PC-3 (cell line): ENCODE measurements at regions of chr17 and their contacts with region 1.

Region 1: GRCh38 chr17:6843241-6843880 is 11.8 kb upstream of the TEKT1 start:
- DNase-seq: peak; percentile 78
- ATAC-seq: no peak
- H3K4me3 ChIP-seq: no peak overlapping the region
- H3K27ac ChIP-seq: no peak overlapping the region
- H3K4me1 ChIP-seq: no peaks in the 10 kb centered on the region; the same call in 1 of the 2 replicates
- H3K27me3 ChIP-seq: no peaks in the 10 kb centered on the region
- CTCF ChIP-seq: peak; percentile 61

Region 2: GRCh38 chr17:6666077-6666521 is 177.3 kb before region 1 on chr17:
- CTCF ChIA-PET with region 1: interaction called, 3 read pairs
- POLR2A ChIA-PET with region 1: no interaction called
- intact Hi-C with region 1: loop called (anchors 1 kb)
- DNase-seq: peak; percentile 84
- ATAC-seq: peak; percentile 71
- H3K4me3 ChIP-seq: no peak overlapping the region
- H3K27ac ChIP-seq: no peak overlapping the region
- H3K4me1 ChIP-seq: peaks cover 25% of the 10 kb centered on the region
- H3K27me3 ChIP-seq: no peaks in the 10 kb centered on the region
- CTCF ChIP-seq: peak; percentile 90

Region 3: DNA sequence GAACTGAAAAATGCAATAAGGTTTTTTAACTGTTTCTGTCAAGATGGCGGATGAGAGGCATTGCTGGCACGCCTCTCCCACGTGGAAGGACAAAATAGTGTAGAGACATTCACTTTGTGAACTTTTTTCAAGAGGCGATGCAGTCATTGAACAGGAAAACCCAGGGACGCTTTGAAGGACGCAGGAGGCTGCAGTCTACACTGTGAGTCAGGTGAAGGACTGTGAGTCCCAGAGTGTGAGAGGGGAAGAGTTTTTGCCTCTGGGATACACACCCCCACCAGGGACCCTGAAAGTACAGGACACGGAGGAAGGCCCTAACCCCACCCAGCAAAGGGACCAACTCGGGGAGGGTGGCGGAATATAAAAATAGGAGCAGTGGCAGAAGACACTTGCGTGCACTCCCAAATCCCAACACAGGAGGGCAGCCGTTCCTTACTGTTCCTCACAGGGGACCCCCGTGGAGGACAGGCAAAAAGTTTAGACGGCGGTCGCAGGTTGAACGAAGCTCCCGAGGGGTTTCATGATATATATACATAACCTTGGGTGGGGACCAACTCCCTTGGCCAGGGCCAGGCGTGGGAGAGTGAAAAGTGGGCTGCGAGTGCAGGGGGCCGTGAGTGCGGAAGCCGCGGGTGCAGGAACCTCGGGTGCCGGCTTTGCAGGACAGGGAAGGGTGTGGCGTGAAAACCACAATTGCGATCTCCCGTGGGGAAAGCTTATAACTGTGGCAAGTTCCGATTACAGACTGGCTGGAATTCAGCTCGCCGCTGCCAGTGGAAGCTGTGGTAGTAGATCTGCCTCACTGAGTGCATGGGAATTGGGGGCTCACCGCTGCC is 70.5 kb after region 1 on chr17:
- CTCF ChIA-PET with region 1: no interaction called
- POLR2A ChIA-PET with region 1: no interaction called
- intact Hi-C with region 1: loop called (anchors 5 kb)
- DNase-seq: peak; percentile 8
- ATAC-seq: no peak
- H3K4me3 ChIP-seq: no peak overlapping the region
- H3K27ac ChIP-seq: no peak overlapping the region
- H3K4me1 ChIP-seq: no peaks in the 10 kb centered on the region
- H3K27me3 ChIP-seq: no peaks in the 10 kb centered on the region
- CTCF ChIP-seq: peak; percentile 52

Region 4: GRCh38 chr17:7004398-7005253 is 161.3 kb after region 1 on chr17:
- CTCF ChIA-PET with region 1: no interaction called
- POLR2A ChIA-PET with region 1: no interaction called
- intact Hi-C with region 1: loop called (anchors 5 kb)
- DNase-seq: peak; percentile 82
- ATAC-seq: peak; percentile 71
- H3K4me3 ChIP-seq: no peak overlapping the region
- H3K27ac ChIP-seq: no peak overlapping the region
- H3K4me1 ChIP-seq: no peaks in the 10 kb centered on the region
- H3K27me3 ChIP-seq: no peaks in the 10 kb centered on the region
- CTCF ChIP-seq: peak; percentile 80

Region 5: DNA sequence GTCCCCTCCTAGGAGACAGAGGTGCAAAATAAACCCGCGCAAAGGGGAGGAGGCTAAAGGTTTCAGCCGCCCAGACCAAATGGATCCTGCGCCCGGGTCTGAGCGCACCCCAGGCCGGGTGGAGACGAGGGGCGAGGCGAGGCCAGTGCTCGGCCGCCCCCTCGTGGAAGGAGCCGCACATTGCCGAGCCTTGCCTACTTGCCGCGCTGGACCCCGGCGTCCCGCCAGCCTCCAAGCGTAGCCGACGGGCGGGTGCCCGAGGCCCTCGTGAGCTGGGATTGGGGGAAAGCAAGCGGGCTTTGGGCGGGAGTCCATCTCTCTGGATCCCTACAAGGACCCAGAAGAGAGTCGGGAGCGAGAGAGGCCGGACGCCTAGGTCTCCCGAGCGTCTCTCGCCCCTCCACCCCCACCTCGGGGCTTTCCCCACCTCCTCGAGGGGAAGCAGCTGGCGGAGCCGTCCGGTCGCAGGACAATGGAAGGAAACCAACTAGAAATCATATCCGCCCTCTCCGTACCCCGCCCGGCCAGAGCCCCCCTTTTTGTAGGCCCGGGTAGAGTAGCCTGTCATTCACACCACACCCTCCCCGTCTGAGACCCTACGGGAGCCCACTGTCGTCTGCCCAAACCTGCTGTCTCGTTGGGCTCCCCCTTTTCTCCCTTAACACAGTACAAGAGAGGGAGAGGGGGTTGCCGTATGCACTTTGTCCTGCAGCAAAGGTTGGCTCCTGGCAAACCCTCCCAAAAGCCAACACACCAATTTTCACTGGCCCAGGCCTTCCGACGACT is 178.8 kb after region 1 on chr17:
- CTCF ChIA-PET with region 1: no interaction called
- POLR2A ChIA-PET with region 1: no interaction called
- intact Hi-C with region 1: loop called (anchors 5 kb)
- DNase-seq: peak; percentile 73
- ATAC-seq: peak; percentile 73
- H3K4me3 ChIP-seq: peak overlapping the region; percentile 54
- H3K27ac ChIP-seq: no peak overlapping the region
- H3K4me1 ChIP-seq: peaks cover 12% of the 10 kb centered on the region; the same call in 1 of the 2 replicates
- H3K27me3 ChIP-seq: no peaks in the 10 kb centered on the region
- CTCF ChIP-seq: peak; percentile 79